ENCODE measurements at regions of chr15 and their contacts with region 1.

Region 1: GRCh38 chr15:55685286-55685685 is 57.7 kb downstream of the PRTG start:
- DNase-seq: no peak
- H3K4me3 ChIP-seq: no peak overlapping the region
- H3K27ac ChIP-seq: no peak overlapping the region
- H3K4me1 ChIP-seq: no peaks in the 10 kb centered on the region
- H3K27me3 ChIP-seq: no peaks in the 10 kb centered on the region
- CTCF ChIP-seq: no peak
- POLR2A ChIP-seq: no peak

Region 2: GRCh38 chr15:55737373-55737772 is 52.1 kb after region 1 on chr15:
- intact Hi-C with region 1: loop called (anchors 10 kb)
- DNase-seq: no peak
- H3K4me3 ChIP-seq: no peak overlapping the region
- H3K27ac ChIP-seq: no peak overlapping the region
- H3K4me1 ChIP-seq: peaks cover 0 to 7% of the 10 kb centered on the region in 2 donors
- H3K27me3 ChIP-seq: no peaks in the 10 kb centered on the region
- CTCF ChIP-seq: no peak
- POLR2A ChIP-seq: no peak

Measured in breast epithelium (tissue), 4 donors.